ENCODE measurements at regions of chr7 and their contacts with region 1.

Region 1: DNA sequence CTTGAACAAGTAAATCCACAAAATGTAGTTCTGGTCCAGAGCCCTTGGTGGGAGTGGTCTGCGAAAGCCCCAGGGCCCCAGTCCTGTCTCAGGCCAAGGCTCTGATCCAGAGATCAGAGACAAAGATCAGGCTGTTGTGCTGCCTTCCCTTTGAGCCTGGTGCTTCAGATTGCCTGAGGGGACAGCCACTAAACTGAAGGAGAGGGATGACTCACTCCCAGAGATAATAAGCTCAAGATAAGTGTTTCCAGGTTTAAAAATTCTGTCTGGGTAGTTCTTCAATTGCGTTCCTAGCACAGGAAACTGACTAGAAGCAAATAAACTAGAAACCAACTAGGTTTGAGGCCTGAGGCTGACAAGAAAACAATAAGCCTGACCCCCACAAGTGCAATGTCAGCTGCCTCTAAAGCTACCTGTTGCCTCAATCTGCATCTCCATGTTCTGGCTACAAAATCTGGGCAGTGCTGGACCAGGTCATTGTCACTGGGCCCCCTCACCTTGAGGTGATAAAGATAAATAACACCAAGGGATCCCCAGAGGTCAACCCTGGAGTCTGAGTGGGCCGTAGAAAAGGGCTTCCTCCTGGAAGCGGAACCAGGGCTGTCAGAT is 190.3 kb downstream of the RAMP3 start:
- DNase-seq: peak in 1 of 2 experiments; percentile 23
- H3K4me3 ChIP-seq: no peak overlapping the region
- H3K27ac ChIP-seq: no peak overlapping the region
- H3K4me1 ChIP-seq: peaks cover 8% of the 10 kb centered on the region; the same call in 1 of the 2 replicates
- H3K27me3 ChIP-seq: peaks cover 64% of the 10 kb centered on the region
- CTCF ChIP-seq: no peak

Region 2: GRCh38 chr7:45306752-45307305 is 41.1 kb before region 1 on chr7:
- CTCF ChIA-PET with region 1: no interaction called
- POLR2A ChIA-PET with region 1: interaction called, 20 read pairs
- intact Hi-C with region 1: no loop called
- DNase-seq: no peak
- H3K4me3 ChIP-seq: no peak overlapping the region
- H3K27ac ChIP-seq: no peak overlapping the region
- H3K4me1 ChIP-seq: no peaks in the 10 kb centered on the region
- H3K27me3 ChIP-seq: peaks cover 70% of the 10 kb centered on the region
- CTCF ChIP-seq: no peak